ENCODE measurements at regions of chr15 and their contacts with region 1.

Region 1: DNA sequence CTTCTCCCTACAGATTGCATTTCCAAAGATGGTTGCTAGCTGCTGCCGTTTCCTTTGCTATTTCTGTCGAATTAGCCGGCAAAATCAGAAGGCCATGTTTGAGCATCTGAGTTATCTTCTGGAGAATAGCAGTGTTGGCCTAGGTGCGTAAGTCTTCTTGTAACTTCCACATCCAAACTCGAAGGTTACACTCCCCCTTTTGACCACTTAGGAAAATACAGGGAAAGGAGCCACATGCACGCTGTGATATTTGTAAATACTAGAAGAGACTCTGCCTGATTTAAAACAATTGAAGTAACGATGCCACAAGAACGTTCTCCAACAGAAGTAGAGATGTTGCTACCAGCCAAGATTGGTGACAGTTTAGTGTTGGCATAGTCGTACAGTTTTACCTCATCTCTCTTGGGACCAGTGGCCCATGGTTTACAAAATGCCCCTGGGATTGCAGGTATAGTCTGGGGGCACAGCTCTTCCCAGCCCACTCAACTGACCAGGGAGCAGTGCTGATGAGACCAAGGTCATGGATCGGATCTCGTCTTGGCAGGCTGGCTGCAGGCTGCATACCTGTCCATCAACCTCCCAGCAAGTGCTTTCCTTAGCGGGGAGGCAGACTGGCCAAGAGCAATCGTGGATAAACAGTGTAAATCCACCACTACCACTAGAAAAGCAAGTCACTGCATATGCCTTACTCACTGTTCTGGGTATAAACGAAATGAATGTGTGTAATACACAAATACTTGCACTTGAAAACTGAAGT is 268.4 kb upstream of the CHRM5 start:
- DNase-seq: no peak
- CTCF ChIP-seq: no peak

Region 2: DNA sequence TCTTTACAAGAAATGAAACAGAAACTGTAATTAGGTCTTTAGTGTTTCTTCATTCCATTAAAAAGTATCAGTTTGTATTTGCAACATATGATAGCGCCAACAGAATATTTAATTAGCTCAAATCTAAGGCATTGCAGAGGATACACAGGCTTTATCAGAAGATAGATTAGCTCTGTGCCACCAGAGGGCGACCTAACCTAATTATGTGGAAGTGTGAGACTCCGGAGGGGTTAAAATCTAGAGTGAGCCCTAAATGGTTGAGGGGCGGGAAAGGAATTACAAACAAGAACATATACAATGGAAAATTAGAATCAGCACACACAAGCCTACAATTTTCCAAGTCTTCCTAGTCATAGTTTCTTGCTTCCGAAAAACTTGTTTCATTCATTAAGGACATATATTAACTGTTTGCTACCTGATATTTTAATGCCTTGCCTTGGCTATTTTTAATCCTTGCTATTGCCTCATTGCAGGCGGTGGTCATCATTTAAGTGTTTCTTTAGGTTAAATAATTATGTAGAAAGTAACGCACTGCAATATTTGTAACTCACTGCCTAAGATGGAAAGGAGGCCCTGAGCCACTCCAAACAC is 407.1 kb before region 1 on chr15:
- in situ Hi-C with region 1: loop called (anchors 10 kb)
- DNase-seq: peak; percentile 61
- CTCF ChIP-seq: peak; percentile 77

Region 3: GRCh38 chr15:33476076-33476475 is 223.8 kb before region 1 on chr15:
- in situ Hi-C with region 1: no loop called
- DNase-seq: no peak
- CTCF ChIP-seq: no peak

Region 4: GRCh38 chr15:33565094-33565493 is 134.8 kb before region 1 on chr15:
- in situ Hi-C with region 1: no loop called
- DNase-seq: no peak
- CTCF ChIP-seq: no peak

Region 5: GRCh38 chr15:34318277-34319079 is 618.6 kb after region 1 on chr15:
- in situ Hi-C with region 1: no loop called
- DNase-seq: peak; percentile 34
- CTCF ChIP-seq: no peak